AG04450 (cell line): ENCODE measurements at regions of chr2 and their contacts with region 1.

Region 1: GRCh38 chr2:46776687-46777327 is 138.8 kb downstream of the MCFD2 start:
- DNase-seq: no peak
- H3K4me3 ChIP-seq: no peak overlapping the region
- H3K27ac ChIP-seq: no peak overlapping the region
- H3K27me3 ChIP-seq: no peaks in the 10 kb centered on the region
- CTCF ChIP-seq: peak; percentile 79

Region 2: DNA sequence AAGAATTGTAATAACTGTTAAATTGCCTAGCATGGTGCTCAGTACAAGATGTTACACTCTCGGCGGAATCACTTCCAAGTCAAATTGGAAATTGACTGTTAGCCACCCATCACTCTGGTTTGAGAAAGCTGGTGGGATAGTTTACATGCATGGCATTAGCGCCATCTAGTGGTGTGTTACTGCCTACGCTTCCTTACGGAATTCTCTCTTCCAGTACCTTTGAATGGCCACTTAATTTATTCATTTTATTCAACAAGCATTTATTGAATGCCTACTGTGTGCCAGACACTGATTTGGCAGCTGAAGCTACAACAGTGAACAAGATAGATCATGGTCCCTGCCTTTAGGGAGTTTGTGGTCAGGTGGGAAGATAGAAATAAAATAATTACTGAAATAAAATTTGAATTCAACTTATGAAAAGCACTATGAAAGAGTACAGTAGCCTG is 126.2 kb before region 1 on chr2:
- CTCF ChIA-PET with region 1: interaction called, 19 read pairs
- POLR2A ChIA-PET with region 1: no interaction called
- DNase-seq: peak; percentile 77
- H3K4me3 ChIP-seq: no peak overlapping the region
- H3K27ac ChIP-seq: no peak overlapping the region
- H3K27me3 ChIP-seq: no peaks in the 10 kb centered on the region
- CTCF ChIP-seq: peak; percentile 94

Region 3: DNA sequence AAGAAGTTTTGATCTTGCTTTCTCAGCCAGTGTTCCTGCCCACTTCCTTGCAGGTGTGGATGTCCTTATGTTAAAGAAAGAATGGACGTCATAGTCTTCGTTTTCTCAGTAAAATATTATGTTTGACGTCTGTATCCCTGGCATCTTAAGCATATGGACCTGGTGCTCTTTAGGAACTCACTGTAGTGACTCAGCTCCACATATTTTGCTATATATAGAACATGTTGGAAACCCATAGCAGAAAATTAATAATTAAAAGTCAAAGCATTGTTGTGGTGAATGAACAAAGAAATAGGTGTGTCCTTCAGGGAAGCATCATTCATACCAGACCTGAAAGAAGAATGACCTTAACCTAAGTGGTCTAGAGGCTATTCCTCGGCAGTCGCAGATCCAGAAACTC is 57.3 kb before region 1 on chr2:
- CTCF ChIA-PET with region 1: interaction called, 12 read pairs
- POLR2A ChIA-PET with region 1: no interaction called
- DNase-seq: peak; percentile 34
- H3K4me3 ChIP-seq: no peak overlapping the region
- H3K27ac ChIP-seq: peak overlapping the region; percentile 53
- H3K27me3 ChIP-seq: no peaks in the 10 kb centered on the region
- CTCF ChIP-seq: no peak

Region 4: DNA sequence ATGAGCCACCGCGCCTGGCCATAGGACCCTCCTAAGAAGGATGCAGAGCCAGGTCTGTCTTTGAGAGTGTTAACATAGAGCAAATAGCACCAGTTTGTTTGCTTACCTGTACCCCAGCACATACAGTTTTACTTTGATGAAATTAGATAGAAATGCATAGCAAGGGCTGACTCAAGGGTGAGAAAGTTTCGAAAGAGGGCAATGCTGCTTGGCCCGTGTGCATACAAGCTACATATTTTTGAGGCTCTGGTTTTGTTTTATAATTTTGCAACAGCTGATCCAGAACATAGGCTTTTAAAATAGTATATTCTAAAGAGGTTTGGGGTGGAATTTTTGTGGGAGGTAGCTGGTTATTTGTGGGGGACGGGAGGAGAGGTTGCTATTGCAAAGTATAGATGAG is 12.9 kb before region 1 on chr2:
- CTCF ChIA-PET with region 1: interaction called, 10 read pairs
- POLR2A ChIA-PET with region 1: interaction called, 5 read pairs
- DNase-seq: no peak
- H3K4me3 ChIP-seq: no peak overlapping the region
- H3K27ac ChIP-seq: no peak overlapping the region
- H3K27me3 ChIP-seq: no peaks in the 10 kb centered on the region
- CTCF ChIP-seq: no peak

Region 5: DNA sequence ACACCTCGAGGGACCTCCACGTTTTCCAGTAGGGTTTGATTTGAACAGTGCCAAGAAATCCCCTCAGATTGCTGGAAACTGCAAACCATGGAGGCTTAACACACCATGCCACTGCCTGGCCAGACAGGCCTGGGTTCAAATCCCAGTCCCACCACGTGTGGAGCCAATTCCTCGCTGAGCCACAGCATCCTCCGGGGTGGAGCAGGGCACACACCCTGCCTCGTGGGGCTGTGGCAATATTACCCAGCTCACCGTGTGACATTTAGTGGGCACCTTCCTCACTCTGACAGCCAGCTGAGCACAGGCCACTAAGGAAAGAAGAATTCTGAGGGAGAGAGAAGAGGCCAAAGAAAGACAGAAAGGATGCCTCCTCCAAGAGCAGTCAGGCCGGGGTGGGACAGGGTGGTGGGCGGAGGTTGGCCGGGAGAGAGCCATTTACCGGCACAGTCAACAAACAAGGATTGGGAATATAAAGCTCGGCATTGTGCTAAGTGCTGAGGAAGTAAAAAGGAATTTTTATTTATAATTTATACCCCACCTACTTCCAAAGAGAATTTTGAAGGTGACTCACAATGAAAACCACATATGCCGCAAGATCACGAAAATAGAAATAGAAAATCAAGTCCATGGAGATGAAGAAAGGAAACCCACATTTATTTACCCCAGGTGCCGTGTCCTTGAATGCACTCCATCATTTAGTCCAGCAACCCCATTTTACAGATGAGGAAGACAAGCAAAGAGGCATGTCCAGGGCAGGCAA is 27.3 kb after region 1 on chr2:
- CTCF ChIA-PET with region 1: interaction called, 15 read pairs
- POLR2A ChIA-PET with region 1: interaction called, 3 read pairs
- DNase-seq: peak; percentile 79
- H3K4me3 ChIP-seq: no peak overlapping the region
- H3K27ac ChIP-seq: peak overlapping the region; percentile 97
- H3K27me3 ChIP-seq: no peaks in the 10 kb centered on the region
- CTCF ChIP-seq: no peak

Region 6: DNA sequence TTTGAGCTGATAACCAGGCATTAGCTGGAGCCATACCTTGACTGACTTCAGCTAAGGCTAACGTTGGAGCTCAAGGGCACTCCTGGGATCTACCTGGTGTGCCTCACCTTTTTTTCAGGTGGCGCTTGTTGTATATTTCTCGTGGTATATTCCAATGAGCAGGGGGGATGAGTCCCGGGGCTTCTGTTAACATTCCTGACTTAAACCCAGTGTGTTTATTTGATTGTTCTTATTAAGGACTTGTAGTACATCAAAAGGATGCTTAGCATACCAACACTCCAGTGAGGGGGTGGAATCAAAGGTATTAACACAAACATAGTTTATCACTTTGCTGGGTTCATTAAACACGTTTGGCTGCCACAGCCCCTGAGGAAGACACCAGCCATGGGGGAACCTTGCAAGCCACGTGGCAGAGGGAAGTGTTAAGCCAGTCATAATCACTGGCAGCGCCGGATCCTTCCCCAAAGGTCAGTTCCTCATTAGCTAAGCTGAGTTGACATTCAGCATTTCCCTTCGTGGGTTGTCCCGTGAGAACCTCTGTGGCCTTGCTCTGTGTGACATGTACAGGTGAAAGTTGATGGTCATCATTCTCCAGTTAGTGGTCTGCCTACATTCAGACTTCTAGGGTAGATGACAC is 258.3 kb after region 1 on chr2:
- CTCF ChIA-PET with region 1: no interaction called
- POLR2A ChIA-PET with region 1: no interaction called
- DNase-seq: no peak
- H3K4me3 ChIP-seq: no peak overlapping the region
- H3K27ac ChIP-seq: peak overlapping the region; percentile 100
- H3K27me3 ChIP-seq: no peaks in the 10 kb centered on the region
- CTCF ChIP-seq: no peak